ENCODE measurements at regions of chr9 and their contacts with region 1.

Region 1: DNA sequence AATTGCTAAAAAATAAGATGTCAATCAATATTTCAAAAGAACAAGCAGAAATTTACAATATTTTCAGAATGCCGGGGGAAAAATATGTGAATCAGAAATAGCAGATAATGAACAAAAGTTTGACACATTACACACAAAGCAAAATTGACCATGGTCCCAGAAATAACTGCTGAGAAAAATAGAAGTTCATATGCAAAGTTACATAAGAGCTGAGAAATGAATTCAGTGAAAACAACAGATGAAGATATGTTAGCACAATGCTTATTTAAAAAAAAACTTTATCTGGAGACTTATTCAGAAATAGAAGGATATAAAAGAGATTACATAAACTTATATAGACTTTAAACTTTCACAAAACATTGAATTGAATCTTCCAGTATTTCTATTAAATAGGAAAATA is 1483.7 kb upstream of the ACO1 start:
- DNase-seq: no peak
- H3K4me3 ChIP-seq: no peak overlapping the region
- H3K4me3 Mint-ChIP-seq: no peak overlapping the region
- H3K27ac ChIP-seq: no peak overlapping the region
- H3K27ac Mint-ChIP-seq: no peak overlapping the region
- H3K4me1 ChIP-seq: no peaks in the 10 kb centered on the region
- H3K4me1 Mint-ChIP-seq: no peaks in the 10 kb centered on the region
- H3K27me3 ChIP-seq: no peaks in the 10 kb centered on the region
- H3K27me3 Mint-ChIP-seq: no peaks in the 10 kb centered on the region

Region 2: GRCh38 chr9:30799527-30800101 is 101.1 kb before region 1 on chr9:
- CTCF ChIA-PET with region 1: no interaction called
- POLR2A ChIA-PET with region 1: no interaction called
- intact Hi-C with region 1: no loop called
- DNase-seq: no peak
- H3K4me3 ChIP-seq: no peak overlapping the region
- H3K4me3 Mint-ChIP-seq: no peak overlapping the region
- H3K27ac ChIP-seq: no peak overlapping the region
- H3K27ac Mint-ChIP-seq: no peak overlapping the region
- H3K4me1 ChIP-seq: no peaks in the 10 kb centered on the region
- H3K4me1 Mint-ChIP-seq: no peaks in the 10 kb centered on the region
- H3K27me3 ChIP-seq: no peaks in the 10 kb centered on the region
- H3K27me3 Mint-ChIP-seq: no peaks in the 10 kb centered on the region

Region 3: GRCh38 chr9:30913331-30913730 is 12.6 kb after region 1 on chr9:
- CTCF ChIA-PET with region 1: no interaction called
- POLR2A ChIA-PET with region 1: no interaction called
- intact Hi-C with region 1: loop called (anchors 1 kb)
- DNase-seq: no peak
- H3K4me3 ChIP-seq: no peak overlapping the region
- H3K4me3 Mint-ChIP-seq: no peak overlapping the region
- H3K27ac ChIP-seq: no peak overlapping the region
- H3K27ac Mint-ChIP-seq: no peak overlapping the region
- H3K4me1 ChIP-seq: no peaks in the 10 kb centered on the region
- H3K4me1 Mint-ChIP-seq: no peaks in the 10 kb centered on the region
- H3K27me3 ChIP-seq: no peaks in the 10 kb centered on the region
- H3K27me3 Mint-ChIP-seq: peaks cover 0 to 1% of the 10 kb centered on the region in 2 donors

Region 4: GRCh38 chr9:31259824-31260223 is 359.1 kb after region 1 on chr9:
- CTCF ChIA-PET with region 1: no interaction called
- POLR2A ChIA-PET with region 1: no interaction called
- intact Hi-C with region 1: no loop called
- DNase-seq: peak in 4 of 5 donors; percentile 54 to 76 (median 65)
- H3K4me3 ChIP-seq: no peak overlapping the region
- H3K4me3 Mint-ChIP-seq: peak overlapping the region; percentile 19 to 70 (median 54)
- H3K27ac ChIP-seq: no peak overlapping the region
- H3K27ac Mint-ChIP-seq: peak overlapping the region in 6 of 7 donors; percentile 5 to 84 (median 39)
- H3K4me1 ChIP-seq: peaks cover 20% of the 10 kb centered on the region
- H3K4me1 Mint-ChIP-seq: peaks cover 11 to 13% (median 12%) of the 10 kb centered on the region in 4 donors
- H3K27me3 ChIP-seq: no peaks in the 10 kb centered on the region
- H3K27me3 Mint-ChIP-seq: no peaks in the 10 kb centered on the region